ENCODE measurements at regions of chr10 and their contacts with region 1.

Region 1: GRCh38 chr10:26448706-26449435 is 10.7 kb downstream of the APBB1IP start:
- DNase-seq: peak; percentile 85
- H3K4me3 Mint-ChIP-seq: peak overlapping the region; percentile 54
- H3K27ac Mint-ChIP-seq: peak overlapping the region; percentile 88
- H3K4me1 Mint-ChIP-seq: peaks cover 87% of the 10 kb centered on the region
- H3K27me3 Mint-ChIP-seq: no peaks in the 10 kb centered on the region

Region 2: GRCh38 chr10:26199841-26200240 is 249.0 kb before region 1 on chr10:
- CTCF ChIA-PET with region 1: no interaction called
- intact Hi-C with region 1: no loop called
- DNase-seq: no peak
- H3K4me3 Mint-ChIP-seq: no peak overlapping the region
- H3K27ac Mint-ChIP-seq: no peak overlapping the region
- H3K4me1 Mint-ChIP-seq: peaks cover 7% of the 10 kb centered on the region
- H3K27me3 Mint-ChIP-seq: no peaks in the 10 kb centered on the region

Region 3: GRCh38 chr10:26215935-26216584 is 232.8 kb before region 1 on chr10:
- CTCF ChIA-PET with region 1: no interaction called
- intact Hi-C with region 1: loop called (anchors 10 kb)
- DNase-seq: peak; percentile 71
- H3K4me3 Mint-ChIP-seq: peak overlapping the region; percentile 40
- H3K27ac Mint-ChIP-seq: no peak overlapping the region
- H3K4me1 Mint-ChIP-seq: peaks cover 40% of the 10 kb centered on the region
- H3K27me3 Mint-ChIP-seq: peaks cover 85% of the 10 kb centered on the region

Region 4: DNA sequence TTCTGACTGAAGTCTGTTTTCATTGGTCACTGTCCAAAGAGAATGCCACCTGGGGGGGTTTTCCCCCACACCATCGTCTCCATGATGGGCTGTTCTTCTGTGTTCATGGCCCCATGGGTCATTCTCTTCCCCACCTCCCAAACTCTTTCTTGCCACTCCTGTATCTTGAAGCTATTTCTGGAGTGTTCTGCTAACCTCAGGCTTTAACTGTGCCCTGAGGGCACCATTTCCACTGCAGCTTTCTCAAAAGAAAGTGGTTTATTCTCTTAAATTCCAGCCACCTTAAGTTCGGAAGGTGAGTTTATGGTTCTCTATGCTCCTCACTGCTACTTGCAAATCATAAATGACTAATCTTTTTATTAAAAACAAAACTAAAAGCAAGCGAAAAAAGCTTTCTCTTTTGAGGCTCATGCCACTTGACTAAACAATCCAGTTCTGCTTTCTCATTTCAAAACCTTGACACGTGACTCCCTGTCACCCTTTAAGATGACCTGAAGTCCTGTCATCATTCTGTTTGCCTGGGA is 18.2 kb before region 1 on chr10:
- CTCF ChIA-PET with region 1: interaction called, 3 read pairs
- intact Hi-C with region 1: loop called (anchors 1 kb)
- DNase-seq: peak; percentile 64
- H3K4me3 Mint-ChIP-seq: peak overlapping the region; percentile 46
- H3K27ac Mint-ChIP-seq: peak overlapping the region; percentile 83
- H3K4me1 Mint-ChIP-seq: peaks cover 26% of the 10 kb centered on the region
- H3K27me3 Mint-ChIP-seq: no peaks in the 10 kb centered on the region

Region 5: GRCh38 chr10:26464632-26465280 is 15.9 kb after region 1 on chr10:
- CTCF ChIA-PET with region 1: interaction called, 4 read pairs
- intact Hi-C with region 1: loop called (anchors 1 kb)
- DNase-seq: no peak
- H3K4me3 Mint-ChIP-seq: no peak overlapping the region
- H3K27ac Mint-ChIP-seq: peak overlapping the region; percentile 69
- H3K4me1 Mint-ChIP-seq: peaks cover 74% of the 10 kb centered on the region
- H3K27me3 Mint-ChIP-seq: no peaks in the 10 kb centered on the region

Region 6: DNA sequence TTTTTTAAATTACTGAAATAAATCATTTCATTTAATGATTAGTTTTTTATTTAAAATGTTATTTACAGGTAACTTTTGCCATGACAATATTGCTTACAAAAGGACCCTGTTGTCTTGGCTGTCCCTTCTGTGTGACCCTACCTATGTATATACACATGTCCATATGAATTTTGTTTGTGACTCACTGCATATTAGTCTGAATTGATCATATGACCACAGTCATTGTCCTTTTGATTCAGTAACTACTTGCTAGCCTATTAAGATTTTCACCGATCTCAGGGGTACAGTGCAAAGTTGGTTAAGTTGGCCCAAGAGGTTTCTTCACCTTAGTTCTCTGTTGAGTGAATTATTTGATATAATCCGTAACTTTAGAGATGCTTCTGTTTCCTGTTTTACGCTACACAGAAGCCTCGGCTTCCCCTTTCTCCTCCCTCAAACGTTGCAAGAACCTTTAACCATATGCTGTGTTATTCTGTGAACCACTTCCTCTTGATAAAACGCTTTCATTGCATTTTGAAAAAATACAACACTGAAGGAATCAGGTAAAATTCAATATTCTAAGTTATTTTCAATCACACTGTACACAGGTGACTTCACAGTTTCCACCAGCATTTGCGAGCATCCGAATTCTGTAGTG is 33.2 kb after region 1 on chr10:
- CTCF ChIA-PET with region 1: interaction called, 4 read pairs
- intact Hi-C with region 1: loop called (anchors 1 kb)
- DNase-seq: peak; percentile 48
- H3K4me3 Mint-ChIP-seq: peak overlapping the region; percentile 69
- H3K27ac Mint-ChIP-seq: peak overlapping the region; percentile 92
- H3K4me1 Mint-ChIP-seq: peaks cover 75% of the 10 kb centered on the region
- H3K27me3 Mint-ChIP-seq: no peaks in the 10 kb centered on the region

Region 7: DNA sequence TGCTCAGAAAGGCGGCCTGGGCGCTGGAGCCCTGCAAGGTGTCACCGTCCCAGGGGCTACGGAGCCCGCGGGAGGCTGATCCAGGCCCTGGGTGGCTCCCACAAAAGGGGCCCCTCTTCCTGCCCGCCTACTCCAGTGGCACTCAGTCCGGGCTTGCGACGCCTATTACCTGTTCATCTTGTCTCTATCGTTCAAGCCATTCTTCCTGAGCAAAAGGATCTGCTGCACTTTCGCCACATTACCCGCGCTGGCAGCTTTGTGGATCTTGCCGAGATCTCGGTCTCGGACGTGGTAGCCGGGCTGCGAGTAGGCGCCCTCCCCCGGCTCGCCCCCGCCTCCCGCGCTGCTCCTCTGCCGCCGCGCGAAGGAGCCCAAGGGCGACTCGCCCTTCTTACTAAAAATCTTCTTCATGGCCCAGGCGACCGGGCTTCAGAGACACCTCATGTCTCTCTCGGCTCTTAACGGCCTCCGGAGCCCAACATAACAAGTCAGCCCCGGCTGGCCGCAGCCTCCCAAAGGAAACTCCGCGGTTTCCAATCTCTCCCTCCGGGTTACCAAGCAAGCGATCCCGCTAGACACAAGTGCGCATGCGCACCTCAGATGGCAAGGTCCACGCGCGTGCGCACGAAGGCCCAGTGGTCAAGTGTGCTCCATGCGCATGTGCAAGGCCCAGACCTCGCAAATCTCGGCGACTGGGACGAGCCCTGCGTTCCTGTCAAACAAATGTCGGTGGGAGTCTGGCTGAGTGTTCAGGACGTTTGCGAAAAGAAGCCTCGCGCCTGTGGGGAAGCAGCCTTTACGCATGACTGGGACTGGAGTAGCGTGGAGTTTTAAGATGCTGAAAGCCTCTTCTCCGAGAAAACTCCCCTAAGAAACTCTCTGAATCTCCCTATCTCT is 651.3 kb after region 1 on chr10 and contains the start of gene ANKRD26:
- CTCF ChIA-PET with region 1: no interaction called
- intact Hi-C with region 1: loop called (anchors 5 kb)
- DNase-seq: peak; percentile 96
- H3K4me3 Mint-ChIP-seq: peak within 1 kb of the TSS; percentile 83
- H3K27ac Mint-ChIP-seq: peak within 1 kb of the TSS; percentile 92
- H3K4me1 Mint-ChIP-seq: peaks cover 44% of the 10 kb centered on the region
- H3K27me3 Mint-ChIP-seq: peaks cover 2% of the 10 kb centered on the region
- total RNA-seq, gene ANKRD26: 4.6 to 6.6 TPM

Measured in activated naive CD4-positive, alpha-beta T cell treated with anti-CD3 and anti-CD28 coated beads for 36 hours (primary cell).